ENCODE measurements at regions of chr5 and their contacts with region 1.

Region 1: GRCh38 chr5:58460732-58461286 is 923 bp upstream of the PLK2 start:
- DNase-seq: peak; percentile 80
- ATAC-seq: peak; percentile 65
- H3K4me3 ChIP-seq: peak overlapping the region; percentile 85
- H3K27ac ChIP-seq: peak overlapping the region; percentile 77
- H3K4me1 ChIP-seq: no peaks in the 10 kb centered on the region; the same call in none of the 2 replicates
- H3K27me3 ChIP-seq: no peaks in the 10 kb centered on the region
- CTCF ChIP-seq: peak; percentile 88
- POLR2A ChIP-seq: no peak
- RAD21 ChIP-seq: peak; percentile 96

Region 2: GRCh38 chr5:56909294-56910209 is 1551.3 kb before region 1 on chr5 and contains the start of gene SETD9:
- CTCF ChIA-PET with region 1: no interaction called
- POLR2A ChIA-PET with region 1: no interaction called
- dilution Hi-C with region 1: no loop called
- in situ Hi-C with region 1: loop called (anchors 25 kb)
- intact Hi-C with region 1: loop called (anchors 5 kb)
- DNase-seq: peak; percentile 96
- ATAC-seq: peak; percentile 94
- H3K4me3 ChIP-seq: peak within 1 kb of the TSS; percentile 91
- H3K27ac ChIP-seq: peak within 1 kb of the TSS; percentile 79
- H3K4me1 ChIP-seq: no peaks in the 10 kb centered on the region
- H3K27me3 ChIP-seq: no peaks in the 10 kb centered on the region
- CTCF ChIP-seq: no peak
- POLR2A ChIP-seq: peak; percentile 95
- RAD21 ChIP-seq: no peak
- total RNA-seq, gene SETD9: 8.1 and 8.9 TPM in 2 replicates

Region 3: DNA sequence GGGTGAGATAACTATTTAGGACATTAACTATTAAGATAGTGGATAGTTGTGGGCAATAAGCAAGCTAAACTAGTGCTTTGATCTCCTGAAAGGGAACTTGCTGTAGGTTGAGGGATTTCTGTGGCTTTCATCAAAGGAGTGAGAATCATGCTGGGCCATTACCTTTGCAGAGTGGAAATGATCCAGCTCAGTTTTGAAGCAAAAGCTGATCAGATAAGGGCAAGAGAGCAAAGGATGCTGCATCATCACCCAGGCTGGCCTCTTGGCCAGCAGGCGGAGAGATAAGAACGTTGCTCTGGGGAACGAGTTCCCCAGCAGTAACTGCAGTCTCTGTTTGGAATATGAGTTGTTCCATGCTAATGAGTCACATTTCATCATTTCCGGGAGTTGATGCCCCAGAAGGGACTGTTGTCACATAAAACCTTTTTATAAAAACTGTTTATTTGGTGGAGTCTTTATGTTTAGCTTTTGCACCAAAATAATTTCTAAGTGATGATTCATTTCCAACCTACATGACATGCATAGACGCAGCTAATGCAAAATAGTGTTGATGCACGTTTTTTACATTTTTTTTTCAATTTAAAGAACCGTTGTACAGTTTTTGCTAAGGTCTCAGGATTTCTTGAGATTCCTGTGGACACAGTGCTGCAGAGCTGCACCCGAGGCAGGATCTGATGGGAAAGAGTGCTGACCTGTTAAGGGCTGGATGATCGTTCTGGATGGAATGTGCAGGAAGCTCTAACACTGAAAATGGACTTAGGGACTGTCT is 1077.5 kb before region 1 on chr5:
- CTCF ChIA-PET with region 1: no interaction called
- POLR2A ChIA-PET with region 1: interaction called, 5 read pairs
- dilution Hi-C with region 1: no loop called
- in situ Hi-C with region 1: no loop called
- intact Hi-C with region 1: loop called (anchors 1 kb)
- DNase-seq: peak; percentile 99
- ATAC-seq: peak; percentile 93
- H3K4me3 ChIP-seq: no peak overlapping the region
- H3K27ac ChIP-seq: peak overlapping the region; percentile 94
- H3K4me1 ChIP-seq: peaks cover 8% of the 10 kb centered on the region
- H3K27me3 ChIP-seq: no peaks in the 10 kb centered on the region
- CTCF ChIP-seq: peak; percentile 59
- POLR2A ChIP-seq: no peak
- RAD21 ChIP-seq: peak; percentile 66

Region 4: GRCh38 chr5:57718155-57718554 is 742.7 kb before region 1 on chr5:
- CTCF ChIA-PET with region 1: no interaction called
- POLR2A ChIA-PET with region 1: no interaction called
- dilution Hi-C with region 1: no loop called
- in situ Hi-C with region 1: no loop called
- intact Hi-C with region 1: loop called (anchors 10 kb)
- DNase-seq: peak; percentile 78
- ATAC-seq: peak; percentile 65
- H3K4me3 ChIP-seq: no peak overlapping the region
- H3K27ac ChIP-seq: no peak overlapping the region
- H3K4me1 ChIP-seq: peaks cover 8% of the 10 kb centered on the region
- H3K27me3 ChIP-seq: no peaks in the 10 kb centered on the region
- CTCF ChIP-seq: no peak
- POLR2A ChIP-seq: no peak
- RAD21 ChIP-seq: no peak

Region 5: DNA sequence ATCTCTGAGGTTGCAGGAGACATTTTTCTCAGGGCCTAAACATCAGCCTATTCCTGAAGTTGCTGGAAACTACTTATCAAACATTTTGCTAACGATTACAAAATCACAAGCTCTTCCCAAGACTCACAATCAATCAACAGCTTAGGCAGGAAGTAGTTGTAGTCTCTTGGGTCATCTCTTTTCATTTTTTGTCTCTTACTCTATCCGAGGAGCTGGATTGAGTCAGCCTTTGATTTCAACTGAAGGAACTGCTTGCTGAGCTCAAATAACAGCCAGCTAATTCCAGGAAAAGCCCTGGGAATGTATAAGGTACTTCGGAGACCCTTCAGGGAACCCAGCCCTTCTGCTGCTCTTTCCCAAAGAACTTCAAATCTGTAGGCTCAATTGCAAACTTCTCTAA is 399.8 kb before region 1 on chr5:
- CTCF ChIA-PET with region 1: no interaction called
- POLR2A ChIA-PET with region 1: no interaction called
- dilution Hi-C with region 1: no loop called
- in situ Hi-C with region 1: no loop called
- intact Hi-C with region 1: loop called (anchors 5 kb)
- DNase-seq: peak; percentile 78
- ATAC-seq: peak; percentile 87
- H3K4me3 ChIP-seq: no peak overlapping the region
- H3K27ac ChIP-seq: no peak overlapping the region
- H3K4me1 ChIP-seq: peaks cover 3% of the 10 kb centered on the region; the same call in 1 of the 2 replicates
- H3K27me3 ChIP-seq: no peaks in the 10 kb centered on the region
- CTCF ChIP-seq: no peak
- POLR2A ChIP-seq: no peak
- RAD21 ChIP-seq: no peak; the same call in 1 of the 2 replicates

Region 6: DNA sequence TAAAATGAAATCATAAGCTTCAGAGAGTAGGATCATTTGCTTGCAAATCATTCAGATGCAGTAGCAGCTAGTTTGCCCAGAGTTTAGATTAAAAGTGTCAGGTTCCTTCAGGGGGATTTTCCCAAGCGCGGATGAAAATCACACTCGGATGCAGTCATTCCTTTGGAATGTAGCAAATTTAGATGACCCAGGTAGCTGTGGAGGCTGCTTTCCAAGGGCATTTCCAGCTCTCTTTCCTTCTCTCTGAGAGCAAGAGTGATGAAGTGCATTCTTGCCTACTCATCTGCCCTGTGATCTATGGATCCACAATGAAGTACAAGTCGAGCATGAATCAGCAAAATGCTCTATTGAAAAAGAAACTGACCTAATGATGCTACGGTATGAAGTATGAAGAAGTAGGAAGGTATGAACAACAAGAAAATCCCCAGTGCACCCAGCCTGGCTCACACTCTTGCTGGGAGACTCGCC is 201.1 kb before region 1 on chr5:
- CTCF ChIA-PET with region 1: interaction called, 4 read pairs
- POLR2A ChIA-PET with region 1: interaction called, 3 read pairs
- dilution Hi-C with region 1: no loop called
- in situ Hi-C with region 1: no loop called
- intact Hi-C with region 1: loop called (anchors 5 kb)
- DNase-seq: peak; percentile 98
- ATAC-seq: peak; percentile 85
- H3K4me3 ChIP-seq: peak overlapping the region; percentile 0; the same call in 1 of the 2 replicates
- H3K27ac ChIP-seq: peak overlapping the region; percentile 30; the same call in 1 of the 2 replicates
- H3K4me1 ChIP-seq: peaks cover 4% of the 10 kb centered on the region
- H3K27me3 ChIP-seq: no peaks in the 10 kb centered on the region
- CTCF ChIP-seq: no peak
- POLR2A ChIP-seq: no peak
- RAD21 ChIP-seq: no peak; the same call in 1 of the 2 replicates

Region 7: DNA sequence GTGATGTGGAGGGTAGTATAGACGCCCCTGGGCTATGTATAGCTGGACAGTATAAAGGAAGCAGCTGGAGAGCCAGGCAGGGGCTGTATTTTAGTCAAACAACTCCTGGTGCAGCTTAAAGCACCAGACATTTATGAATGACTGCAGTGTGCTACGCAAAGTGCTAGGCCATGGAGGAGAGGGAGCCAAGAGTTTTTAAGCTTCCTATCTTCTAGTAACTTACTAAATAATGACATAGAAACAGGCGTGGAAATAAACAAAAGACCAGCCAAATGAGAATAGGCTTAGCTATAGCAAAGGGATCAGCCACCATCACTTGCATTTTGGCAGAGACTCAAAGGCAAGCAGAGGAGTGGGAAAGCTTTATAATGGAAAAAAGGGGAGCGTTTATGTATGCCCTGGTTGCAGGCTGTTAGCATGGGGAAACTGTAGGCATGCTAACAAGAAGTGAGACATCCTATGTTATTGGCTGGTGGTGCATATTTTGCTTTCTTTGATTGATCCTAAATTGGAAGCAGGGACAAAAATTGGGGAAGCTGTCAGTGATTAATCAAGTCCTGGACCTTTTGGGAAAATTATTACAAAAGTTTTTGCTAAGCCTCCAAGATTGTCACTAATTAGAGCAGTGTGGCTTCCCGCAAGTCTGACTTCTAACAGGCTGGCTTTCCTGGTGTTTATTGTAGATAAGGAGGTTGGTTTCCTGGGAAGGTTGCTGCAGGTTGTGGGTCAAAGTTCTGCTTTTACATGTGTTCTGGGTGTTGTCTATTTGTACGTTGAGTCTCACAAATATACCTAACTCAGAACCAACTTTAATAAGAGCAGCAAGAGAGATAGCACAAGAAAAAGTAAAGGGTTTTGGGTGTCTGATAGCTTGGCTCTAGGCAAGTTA is 168.7 kb after region 1 on chr5:
- CTCF ChIA-PET with region 1: no interaction called
- POLR2A ChIA-PET with region 1: no interaction called
- dilution Hi-C with region 1: no loop called
- in situ Hi-C with region 1: no loop called
- intact Hi-C with region 1: no loop called
- DNase-seq: no peak
- ATAC-seq: no peak
- H3K4me3 ChIP-seq: no peak overlapping the region
- H3K27ac ChIP-seq: no peak overlapping the region
- H3K4me1 ChIP-seq: no peaks in the 10 kb centered on the region
- H3K27me3 ChIP-seq: no peaks in the 10 kb centered on the region
- CTCF ChIP-seq: no peak
- POLR2A ChIP-seq: no peak
- RAD21 ChIP-seq: no peak

Measured in IMR-90 (cell line).